BJ (cell line): ENCODE measurements at regions of chr16 and their contacts with region 1.

Region 1: GRCh38 chr16:82016263-82016662 is 5.0 kb upstream of the SDR42E1 start:
- DNase-seq: no peak
- H3K4me3 ChIP-seq: no peak overlapping the region
- H3K27me3 ChIP-seq: no peaks in the 10 kb centered on the region
- CTCF ChIP-seq: peak; percentile 32

Region 2: DNA sequence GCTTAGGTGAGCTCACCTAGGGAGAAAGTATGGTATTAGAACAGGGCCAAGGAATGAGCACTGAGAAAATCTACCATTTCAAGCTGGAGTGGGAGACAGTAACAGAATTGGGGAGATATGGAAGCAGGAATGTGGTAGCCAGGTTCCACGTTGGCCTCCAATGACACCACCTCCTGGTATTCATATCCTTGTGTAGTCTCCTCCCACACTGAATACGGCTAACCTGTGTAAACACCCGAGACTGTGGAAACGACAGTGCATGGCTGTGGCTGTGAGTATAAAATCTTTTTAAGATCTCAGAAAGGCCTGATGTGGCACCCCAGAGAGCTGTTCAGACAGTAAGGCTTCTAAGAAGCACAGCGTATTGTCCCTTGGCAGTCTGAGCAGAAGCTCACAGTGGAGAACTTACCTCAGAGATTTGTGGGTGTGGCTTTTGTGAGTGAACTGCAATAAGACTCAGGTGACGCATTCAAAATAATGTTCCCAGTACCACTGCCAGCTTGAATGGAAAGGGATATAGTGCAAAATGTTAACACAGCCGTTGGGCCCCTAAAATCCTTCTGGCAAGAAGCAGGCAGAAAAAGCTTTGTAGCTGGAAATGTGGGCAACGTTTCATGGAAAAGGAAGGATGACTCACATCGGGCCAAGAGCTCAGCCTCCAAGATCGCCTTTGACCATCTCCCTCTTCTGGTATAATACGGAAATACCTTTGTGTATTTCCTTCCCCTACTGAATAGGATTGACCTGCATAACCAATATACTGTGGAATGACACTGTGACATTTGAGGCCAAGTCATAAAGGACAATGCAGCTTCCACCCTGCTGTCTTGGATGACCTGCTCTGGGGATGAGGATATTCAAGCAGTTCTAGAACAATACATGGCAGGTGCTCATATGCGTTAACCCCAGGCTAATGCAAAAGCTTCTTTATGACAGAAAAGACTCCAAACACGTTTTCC is 19.3 kb before region 1 on chr16:
- CTCF ChIA-PET with region 1: interaction called, 10 read pairs
- POLR2A ChIA-PET with region 1: no interaction called
- DNase-seq: peak; percentile 12
- H3K4me3 ChIP-seq: no peak overlapping the region
- H3K27me3 ChIP-seq: no peaks in the 10 kb centered on the region
- CTCF ChIP-seq: peak; percentile 45

Region 3: GRCh38 chr16:82263521-82264143 is 247.4 kb after region 1 on chr16:
- CTCF ChIA-PET with region 1: no interaction called
- POLR2A ChIA-PET with region 1: no interaction called
- DNase-seq: no peak
- H3K4me3 ChIP-seq: no peak overlapping the region
- H3K27me3 ChIP-seq: 0 out of 2 replicates have a peak, but pooled peaks cover 2% of the 10 kb centered on the region
- CTCF ChIP-seq: peak; percentile 89